ENCODE measurements at regions of chr20 and their contacts with region 1.

Region 1: GRCh38 chr20:47379433-47380150 is 23.1 kb upstream of the ZMYND8 start:
- DNase-seq: no peak
- H3K4me3 Mint-ChIP-seq: no peak overlapping the region
- H3K27ac Mint-ChIP-seq: peak overlapping the region; percentile 82
- H3K4me1 Mint-ChIP-seq: peaks cover 28% of the 10 kb centered on the region
- H3K27me3 Mint-ChIP-seq: no peaks in the 10 kb centered on the region

Region 2: DNA sequence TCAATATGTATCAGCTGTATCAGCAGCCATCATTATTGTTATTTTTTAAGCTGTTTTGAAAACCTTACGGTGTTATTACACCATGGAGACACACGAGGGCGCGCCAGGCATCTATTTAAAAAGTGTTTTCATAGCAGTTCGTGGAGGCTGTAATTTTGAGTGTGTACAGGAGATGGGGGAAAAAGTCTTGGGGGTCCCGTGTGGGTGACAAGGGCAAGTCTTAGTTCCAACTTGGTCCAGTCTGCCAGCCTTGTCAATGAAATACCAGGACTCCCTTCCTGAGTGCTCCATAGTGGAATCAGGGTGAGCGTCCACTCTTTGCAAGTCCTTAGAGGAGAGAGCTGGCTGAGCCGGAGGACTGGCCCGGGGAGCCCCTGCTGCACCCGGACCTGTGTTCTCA is 626.9 kb before region 1 on chr20:
- intact Hi-C with region 1: loop called (anchors 5 kb)
- DNase-seq: peak; percentile 24
- H3K4me3 Mint-ChIP-seq: no peak overlapping the region
- H3K27ac Mint-ChIP-seq: no peak overlapping the region
- H3K4me1 Mint-ChIP-seq: peaks cover 6% of the 10 kb centered on the region
- H3K27me3 Mint-ChIP-seq: peaks cover 6% of the 10 kb centered on the region

Region 3: GRCh38 chr20:47205577-47206498 is 173.8 kb before region 1 on chr20:
- intact Hi-C with region 1: loop called (anchors 1 kb)
- DNase-seq: peak; percentile 46
- H3K4me3 Mint-ChIP-seq: no peak overlapping the region
- H3K27ac Mint-ChIP-seq: peak overlapping the region; percentile 63
- H3K4me1 Mint-ChIP-seq: peaks cover 8% of the 10 kb centered on the region
- H3K27me3 Mint-ChIP-seq: no peaks in the 10 kb centered on the region

Region 4: DNA sequence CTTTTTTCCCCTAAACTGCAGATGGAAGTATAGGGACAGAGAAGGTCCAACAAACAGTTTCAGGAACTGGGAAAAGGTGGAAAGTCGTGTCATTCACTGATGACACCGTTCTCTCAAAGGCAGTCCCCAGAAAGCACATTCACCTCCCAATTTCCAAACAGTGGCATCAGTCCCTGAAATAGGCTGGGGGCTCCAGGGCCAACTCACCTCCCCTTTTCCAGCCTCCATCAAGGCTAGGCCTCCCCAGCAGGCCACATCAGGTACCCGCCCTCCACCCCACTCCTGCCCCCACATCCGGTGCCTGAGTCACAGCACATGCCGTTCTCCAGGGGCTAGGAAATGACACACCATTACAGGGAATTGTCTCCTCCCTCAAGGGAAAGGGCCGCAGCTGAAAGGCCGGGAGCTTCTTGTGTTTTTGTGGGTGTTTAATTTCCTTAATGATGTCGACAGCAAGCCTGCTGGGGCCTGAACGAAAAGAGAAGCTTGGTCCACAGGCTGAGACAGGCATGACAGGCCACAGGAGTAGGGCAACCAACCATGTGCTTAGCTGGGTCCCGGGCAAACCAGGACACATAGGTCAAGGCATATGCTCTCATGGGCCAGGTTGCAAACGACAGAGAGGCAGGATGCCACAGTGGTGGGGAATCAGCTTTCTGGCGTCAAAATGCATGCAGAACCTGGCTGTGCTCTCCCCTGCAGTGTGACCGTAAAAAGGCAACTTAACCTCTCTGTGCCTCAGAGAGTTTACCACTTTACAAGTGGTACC is 62.3 kb before region 1 on chr20:
- intact Hi-C with region 1: loop called (anchors 1 kb)
- DNase-seq: peak; percentile 43
- H3K4me3 Mint-ChIP-seq: peak overlapping the region; percentile 51
- H3K27ac Mint-ChIP-seq: peak overlapping the region; percentile 92
- H3K4me1 Mint-ChIP-seq: peaks cover 61% of the 10 kb centered on the region
- H3K27me3 Mint-ChIP-seq: no peaks in the 10 kb centered on the region

Region 5: DNA sequence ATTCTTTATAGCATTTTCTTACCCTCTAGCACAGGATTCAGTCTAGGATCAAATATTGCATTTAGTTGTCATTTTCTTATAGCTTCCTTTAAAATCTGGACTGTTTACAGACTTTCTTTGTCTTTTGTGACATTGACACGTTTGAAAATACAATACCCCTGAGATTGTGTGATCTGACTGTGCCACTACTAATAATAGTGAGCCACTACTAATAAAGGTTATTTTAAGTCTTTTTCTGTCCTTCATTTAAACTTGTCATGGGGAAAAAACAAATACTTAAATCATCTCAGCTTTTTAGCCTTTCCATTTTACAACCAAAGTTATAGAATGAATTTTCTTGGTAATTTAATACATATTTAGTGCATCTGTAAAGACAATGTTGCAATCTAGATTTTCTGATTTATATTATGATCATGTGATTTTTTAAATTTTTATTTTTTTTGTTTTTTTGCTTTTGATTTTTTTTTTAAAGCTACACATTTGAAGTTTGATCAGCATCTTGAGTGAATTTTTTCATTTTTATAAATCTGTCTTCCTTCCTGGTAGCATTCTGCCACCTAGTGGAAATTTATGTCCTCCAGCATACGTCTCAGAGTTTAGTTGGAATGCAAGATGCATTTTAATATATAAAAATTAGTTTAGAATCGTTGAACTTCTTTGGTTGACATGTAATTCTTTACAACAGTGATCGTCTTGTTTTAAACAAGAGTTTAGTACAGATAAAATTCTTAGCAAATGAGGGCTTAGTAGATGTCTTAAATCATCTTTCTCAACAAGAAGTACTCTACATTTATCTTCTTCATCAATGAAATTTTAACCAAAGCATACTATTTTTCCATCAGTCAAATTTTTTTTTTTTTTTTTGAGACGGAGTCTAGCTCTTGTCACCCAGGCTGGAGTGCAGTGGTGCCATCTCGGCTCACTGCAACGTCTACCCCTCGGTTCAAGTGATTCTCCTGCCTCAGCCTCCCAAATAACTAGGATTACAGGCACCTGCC is 241.5 kb after region 1 on chr20:
- intact Hi-C with region 1: loop called (anchors 1 kb)
- DNase-seq: no peak
- H3K4me3 Mint-ChIP-seq: no peak overlapping the region
- H3K27ac Mint-ChIP-seq: peak overlapping the region; percentile 19
- H3K4me1 Mint-ChIP-seq: peaks cover 51% of the 10 kb centered on the region
- H3K27me3 Mint-ChIP-seq: no peaks in the 10 kb centered on the region

Region 6: DNA sequence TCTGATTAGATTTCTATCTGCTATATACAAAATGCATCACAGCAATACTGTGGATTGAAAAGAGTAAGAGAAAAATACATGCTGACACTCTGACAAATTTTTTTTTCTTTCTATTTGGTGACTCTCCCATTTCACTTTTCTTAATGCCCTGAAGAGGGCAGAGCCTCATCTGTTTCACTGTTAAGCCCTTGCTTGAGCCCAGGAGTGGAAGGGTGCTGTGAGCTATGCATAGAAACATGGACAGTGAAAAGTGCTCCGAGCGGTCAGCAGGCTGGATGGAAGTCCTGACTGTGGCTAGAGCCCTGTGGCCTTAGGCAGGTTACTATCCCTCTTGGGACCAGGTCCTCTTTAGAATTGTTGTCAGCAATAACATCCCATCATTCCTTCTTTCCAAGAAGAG is 1649.1 kb after region 1 on chr20:
- intact Hi-C with region 1: no loop called
- DNase-seq: no peak
- H3K4me3 Mint-ChIP-seq: no peak overlapping the region
- H3K27ac Mint-ChIP-seq: no peak overlapping the region
- H3K4me1 Mint-ChIP-seq: no peaks in the 10 kb centered on the region
- H3K27me3 Mint-ChIP-seq: no peaks in the 10 kb centered on the region